Breast epithelium (tissue), 4 donors: ENCODE measurements at regions of chr20 and their contacts with region 1.

Region 1: DNA sequence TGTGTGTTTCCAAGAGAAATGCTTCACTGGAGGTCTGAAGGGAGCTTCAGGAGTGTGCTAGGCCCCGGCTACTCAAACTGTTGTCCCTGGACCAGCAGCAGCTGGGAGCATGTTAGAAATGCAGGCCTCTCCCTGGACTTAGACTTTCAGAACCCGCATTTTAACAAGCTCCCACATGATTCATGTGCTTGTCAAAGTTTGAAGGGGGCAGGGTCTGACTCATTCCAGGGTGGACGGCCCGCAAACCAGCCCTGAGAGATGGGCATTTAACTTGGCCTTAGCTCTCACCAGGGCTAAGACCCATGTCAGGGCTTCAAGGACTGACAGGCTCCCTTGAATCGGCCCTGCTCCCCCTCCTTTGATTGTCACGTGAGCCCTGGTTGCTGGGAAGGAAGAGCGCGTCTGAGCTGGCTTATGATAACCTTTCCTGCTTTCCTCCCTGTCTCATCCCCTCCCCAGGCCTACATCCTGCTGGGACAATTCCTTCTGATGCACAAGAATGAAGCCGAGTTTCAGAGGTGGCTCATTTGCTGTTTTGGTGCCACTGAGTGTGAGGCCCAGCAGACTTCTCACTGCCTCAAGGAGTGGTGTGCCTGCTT is 35.5 kb downstream of the BANF2 start:
- DNase-seq: no peak
- H3K4me3 ChIP-seq: no peak overlapping the region
- H3K27ac ChIP-seq: no peak overlapping the region
- H3K4me1 ChIP-seq: no peaks in the 10 kb centered on the region
- H3K27me3 ChIP-seq: no peaks in the 10 kb centered on the region
- CTCF ChIP-seq: no peak
- POLR2A ChIP-seq: no peak

Region 2: DNA sequence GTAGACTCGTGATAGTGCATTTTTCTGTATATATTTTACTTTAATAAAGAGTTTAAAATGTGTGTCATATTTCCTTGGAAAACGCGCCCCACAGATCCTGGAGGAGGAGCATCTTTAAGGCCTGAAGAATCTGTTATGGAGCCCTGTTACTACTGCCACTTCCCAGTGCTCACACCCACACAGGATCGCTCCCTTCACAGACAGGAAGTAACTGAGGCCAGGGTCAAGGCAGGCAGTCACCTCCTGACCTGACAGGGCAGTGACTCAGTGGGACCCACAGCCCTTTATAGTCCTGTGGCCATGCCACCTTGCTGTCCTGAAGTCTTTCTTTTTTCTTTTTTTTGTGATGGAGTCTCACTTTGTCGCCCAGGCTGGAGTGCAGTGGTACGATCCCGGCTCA is 62.2 kb before region 1 on chr20:
- intact Hi-C with region 1: loop called (anchors 2 kb)
- DNase-seq: no peak
- H3K4me3 ChIP-seq: no peak overlapping the region
- H3K27ac ChIP-seq: no peak overlapping the region
- H3K4me1 ChIP-seq: peaks cover 0 to 7% of the 10 kb centered on the region in 2 donors
- H3K27me3 ChIP-seq: no peaks in the 10 kb centered on the region
- CTCF ChIP-seq: no peak
- POLR2A ChIP-seq: no peak

Region 3: DNA sequence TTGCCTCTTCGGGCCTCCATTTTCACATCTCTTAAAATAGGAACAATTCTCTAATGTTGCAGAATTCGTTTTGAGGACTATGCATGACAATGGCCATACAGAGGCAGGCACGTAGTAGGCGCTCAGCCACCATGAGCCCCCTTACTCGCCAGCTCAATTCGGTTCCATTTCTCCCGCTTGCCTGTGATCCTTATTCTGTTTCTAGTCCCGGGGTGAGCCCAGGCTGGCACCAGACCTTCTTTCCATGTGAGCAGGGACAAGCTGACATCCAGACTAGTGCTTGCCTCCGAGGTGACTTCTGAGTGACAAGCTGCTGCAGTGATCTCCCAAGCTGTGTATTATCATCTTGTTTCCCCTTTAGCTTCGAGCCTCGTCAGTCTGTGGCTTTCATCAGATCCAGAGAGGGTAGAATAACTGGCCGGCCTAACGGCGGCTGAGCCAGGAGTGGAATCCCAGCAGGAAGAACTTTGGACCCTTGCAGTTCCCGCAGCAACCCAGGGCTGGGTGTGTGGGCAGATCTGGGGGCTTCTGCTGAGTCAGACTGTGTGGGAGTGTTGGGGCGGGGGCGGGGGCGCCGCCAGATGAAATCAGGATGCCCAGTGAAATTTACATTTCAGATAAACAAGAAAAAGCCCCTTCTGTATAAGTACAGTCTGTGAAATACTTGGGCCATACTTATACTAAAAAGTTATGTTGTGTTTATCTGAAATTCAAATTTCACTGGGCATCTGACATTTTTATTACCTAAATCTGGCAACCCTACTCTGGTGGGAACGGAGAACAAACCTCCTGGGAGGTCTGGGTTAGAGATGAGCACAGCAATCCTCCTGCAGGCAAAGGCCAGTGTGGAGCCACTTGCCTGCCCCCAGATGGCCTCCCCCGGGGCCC is 24.7 kb before region 1 on chr20:
- intact Hi-C with region 1: no loop called
- DNase-seq: no peak
- H3K4me3 ChIP-seq: no peak overlapping the region
- H3K27ac ChIP-seq: no peak overlapping the region
- H3K4me1 ChIP-seq: no peaks in the 10 kb centered on the region
- H3K27me3 ChIP-seq: no peaks in the 10 kb centered on the region
- CTCF ChIP-seq: no peak
- POLR2A ChIP-seq: no peak

Region 4: GRCh38 chr20:17721802-17722486 is 13.4 kb before region 1 on chr20:
- intact Hi-C with region 1: loop called (anchors 1 kb)
- DNase-seq: no peak
- H3K4me3 ChIP-seq: no peak overlapping the region
- H3K27ac ChIP-seq: no peak overlapping the region
- H3K4me1 ChIP-seq: no peaks in the 10 kb centered on the region
- H3K27me3 ChIP-seq: no peaks in the 10 kb centered on the region
- CTCF ChIP-seq: no peak
- POLR2A ChIP-seq: no peak